ENCODE measurements at regions of chrX and their contacts with region 1.

Region 1: DNA sequence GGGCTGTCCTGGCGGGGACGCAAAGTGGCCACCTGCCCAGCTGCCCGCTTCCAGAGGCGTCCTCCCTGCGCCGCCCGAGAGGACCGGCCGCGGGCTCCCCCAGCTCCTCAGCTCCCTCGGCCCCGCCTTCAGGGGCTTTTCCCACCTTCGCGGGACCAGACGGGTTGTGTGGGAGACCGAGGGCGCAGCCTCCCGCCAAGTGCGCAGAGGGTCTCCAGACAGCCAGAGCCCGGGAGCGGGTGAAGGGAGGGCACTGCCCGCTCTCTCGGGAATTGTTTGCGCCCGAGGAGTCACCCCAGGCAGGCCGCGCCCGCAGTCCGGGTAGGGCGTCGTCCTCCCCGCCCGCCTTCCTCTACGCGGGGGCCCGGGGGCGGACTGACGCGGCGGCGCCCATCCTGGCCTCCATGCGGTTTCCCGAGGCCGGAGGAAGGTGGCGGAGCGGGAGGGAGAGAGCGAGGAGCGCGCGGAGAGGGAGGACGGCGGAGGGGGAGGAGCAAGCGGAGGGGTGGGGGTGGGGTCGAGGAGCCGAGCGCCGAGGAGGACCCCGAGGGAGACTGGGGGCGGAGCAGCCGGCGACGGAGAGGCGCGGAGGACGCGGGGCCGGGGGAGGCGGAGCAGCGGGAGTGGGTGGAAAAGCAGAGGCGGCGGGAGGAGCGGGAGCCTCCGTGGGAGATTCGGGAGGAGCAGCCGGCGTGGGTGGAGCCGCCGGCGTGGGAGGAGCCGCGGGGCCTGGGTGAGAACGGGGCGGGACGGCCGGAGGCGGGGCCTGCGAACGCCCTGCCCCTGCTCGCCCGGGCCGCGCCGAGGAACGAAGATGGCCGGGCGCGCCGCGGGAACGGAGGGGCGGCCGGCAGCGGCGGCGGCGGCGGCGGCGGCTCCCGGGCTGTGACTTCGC is 47.6 kb downstream of the CLDN34 start:
- DNase-seq: peak; percentile 94
- ATAC-seq: peak; percentile 92

Region 2: GRCh38 chrX:9708904-9709553 is 305.7 kb before region 1 on chrX:
- intact Hi-C with region 1: no loop called
- DNase-seq: peak; percentile 82
- ATAC-seq: peak; percentile 90

Region 3: DNA sequence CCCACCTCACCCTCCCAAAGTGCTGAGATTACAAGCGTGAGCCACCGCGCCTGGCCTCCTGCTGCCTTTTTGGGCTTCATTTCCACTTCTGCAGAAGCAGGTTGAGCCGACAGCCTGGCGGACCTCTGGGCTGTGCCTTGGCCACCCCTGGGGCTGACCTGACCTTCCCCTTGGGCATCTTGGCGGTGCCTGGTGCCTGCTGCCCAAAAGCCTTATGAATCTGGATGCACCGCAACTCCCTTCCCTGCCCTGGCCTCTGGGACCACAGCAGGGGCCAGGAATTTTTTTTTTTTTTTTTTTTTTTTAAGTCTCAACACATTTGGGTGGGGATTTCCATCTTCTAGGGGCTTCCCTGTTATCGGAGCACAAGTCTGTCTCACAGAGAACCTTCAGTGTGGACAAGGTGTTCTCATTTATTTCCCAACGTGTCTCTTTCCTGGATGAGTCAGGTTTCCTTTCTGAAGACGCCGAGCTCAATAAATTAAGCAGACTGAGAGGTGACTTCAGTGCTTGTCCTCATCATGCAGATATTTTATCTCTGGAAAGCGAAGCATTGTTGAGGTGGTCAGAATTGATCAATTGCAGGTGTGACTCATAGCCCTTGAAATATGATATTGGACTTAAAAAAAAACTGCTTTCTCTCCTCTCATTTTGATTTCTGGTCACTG is 148.8 kb before region 1 on chrX:
- intact Hi-C with region 1: no loop called
- DNase-seq: no peak
- ATAC-seq: no peak

Region 4: GRCh38 chrX:10048076-10048475 is 33.4 kb after region 1 on chrX:
- intact Hi-C with region 1: loop called (anchors 2 kb)
- DNase-seq: no peak
- ATAC-seq: no peak

Region 5: DNA sequence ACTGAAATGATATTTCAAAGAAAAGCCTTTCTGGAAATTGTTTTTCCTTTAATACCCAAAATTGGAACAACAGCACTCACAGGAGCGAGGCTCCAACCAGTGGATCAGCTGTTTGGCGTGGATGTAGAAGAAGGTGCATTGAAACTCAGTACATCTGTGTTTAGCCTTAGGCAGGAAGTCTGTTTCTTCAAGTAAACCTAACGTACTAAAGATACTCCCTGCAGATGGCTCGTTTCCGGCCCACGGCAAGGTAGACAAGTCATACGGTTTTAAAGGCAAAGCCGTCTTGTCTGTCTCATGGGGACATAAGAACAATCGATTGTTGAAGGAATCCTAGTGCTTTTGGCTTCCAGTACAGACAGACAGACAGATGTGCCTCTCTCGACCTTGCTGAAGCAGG is 92.1 kb after region 1 on chrX:
- intact Hi-C with region 1: loop called (anchors 5 kb)
- DNase-seq: no peak
- ATAC-seq: no peak

Region 6: DNA sequence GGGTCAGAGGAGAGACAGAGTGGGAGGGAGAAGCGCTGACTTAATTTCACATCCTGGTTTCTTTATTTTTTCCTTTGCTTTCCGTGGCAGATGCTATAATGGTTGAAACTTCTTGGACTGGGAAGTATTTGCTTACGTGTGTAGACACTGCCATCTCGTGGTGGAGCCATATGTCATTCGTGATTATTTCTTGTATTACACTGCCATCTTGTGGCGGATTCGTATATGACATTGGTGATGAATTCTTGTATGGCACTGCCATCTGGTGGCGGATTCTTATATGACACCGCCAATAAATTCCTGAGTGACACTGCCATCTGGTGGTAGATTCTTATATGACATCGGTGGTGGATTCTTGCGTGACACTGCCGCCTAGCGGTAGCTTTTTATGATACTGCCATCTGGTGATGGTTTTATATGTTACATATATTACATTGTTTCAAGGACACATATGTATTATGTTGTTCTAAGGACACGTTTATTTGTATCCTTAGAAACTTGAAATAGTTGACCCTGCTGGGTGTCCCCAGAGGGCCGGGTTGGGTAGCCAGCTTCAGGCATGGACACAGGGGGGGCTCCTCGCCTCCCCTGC is 104.8 kb after region 1 on chrX:
- intact Hi-C with region 1: no loop called
- DNase-seq: no peak
- ATAC-seq: peak; percentile 79

Measured in Right ventricle myocardium superior (tissue), 1 donor.